Naive thymus-derived CD4-positive, alpha-beta T cell (primary cell): ENCODE measurements at regions of chr15 and their contacts with region 1.

Region 1: DNA sequence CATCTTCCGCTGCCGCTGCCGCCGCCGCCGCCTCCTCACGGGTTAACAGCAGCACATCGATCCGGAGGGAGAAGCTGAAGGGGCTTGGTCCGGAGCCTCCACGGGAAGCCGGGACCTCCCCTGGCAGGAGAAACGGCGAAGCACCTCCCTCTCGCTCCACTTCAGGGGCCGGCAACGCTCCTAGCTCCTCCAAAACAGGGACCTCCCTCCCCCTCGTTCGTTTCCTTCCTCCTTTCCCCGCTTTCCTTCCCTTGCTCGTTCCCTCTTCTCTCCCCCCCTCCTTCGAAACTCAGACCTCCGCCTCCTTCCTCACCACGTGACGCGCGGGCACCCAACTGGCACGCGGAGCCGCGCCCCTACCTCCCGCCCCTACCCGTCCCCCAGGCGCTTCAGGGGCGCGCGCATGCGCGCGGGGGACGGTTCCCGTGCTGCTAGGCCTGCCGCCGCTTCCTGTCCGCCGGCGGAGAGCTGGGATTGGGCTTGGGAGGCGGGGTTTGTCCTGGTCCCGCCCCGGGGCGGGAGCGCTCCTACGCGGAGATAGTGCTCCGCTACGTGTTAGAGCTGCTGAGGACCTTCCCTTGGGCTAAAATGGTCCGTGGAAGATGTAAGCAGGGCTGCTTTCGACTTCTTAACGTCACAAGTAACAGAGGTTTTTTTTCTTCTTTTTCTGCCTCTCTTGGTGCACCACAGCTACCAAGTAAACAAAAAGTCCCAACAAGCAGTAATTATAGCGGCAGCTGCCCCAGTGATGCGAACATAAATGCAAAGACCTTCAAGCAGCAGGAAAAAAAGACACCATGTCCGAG is at the start of gene ADAM10:
- DNase-seq: peak; percentile 84 to 98 (median 93)
- ATAC-seq: peak; percentile 96
- H3K4me3 ChIP-seq: peak within 1 kb of the TSS; percentile 66
- H3K4me3 Mint-ChIP-seq: peak within 1 kb of the TSS; percentile 89 to 99 (median 98)
- H3K27ac ChIP-seq: peak within 1 kb of the TSS; percentile 86
- H3K27ac Mint-ChIP-seq: peak within 1 kb of the TSS; percentile 85 to 96 (median 94)
- H3K4me1 ChIP-seq: peaks cover 17% of the 10 kb centered on the region in 2 donors
- H3K4me1 Mint-ChIP-seq: peaks cover 24 to 45% (median 42%) of the 10 kb centered on the region in 7 donors
- H3K27me3 ChIP-seq: no peaks in the 10 kb centered on the region
- H3K27me3 Mint-ChIP-seq: no peaks in the 10 kb centered on the region
- total RNA-seq, gene ADAM10: 119 to 170 (median 142) TPM

Region 2: DNA sequence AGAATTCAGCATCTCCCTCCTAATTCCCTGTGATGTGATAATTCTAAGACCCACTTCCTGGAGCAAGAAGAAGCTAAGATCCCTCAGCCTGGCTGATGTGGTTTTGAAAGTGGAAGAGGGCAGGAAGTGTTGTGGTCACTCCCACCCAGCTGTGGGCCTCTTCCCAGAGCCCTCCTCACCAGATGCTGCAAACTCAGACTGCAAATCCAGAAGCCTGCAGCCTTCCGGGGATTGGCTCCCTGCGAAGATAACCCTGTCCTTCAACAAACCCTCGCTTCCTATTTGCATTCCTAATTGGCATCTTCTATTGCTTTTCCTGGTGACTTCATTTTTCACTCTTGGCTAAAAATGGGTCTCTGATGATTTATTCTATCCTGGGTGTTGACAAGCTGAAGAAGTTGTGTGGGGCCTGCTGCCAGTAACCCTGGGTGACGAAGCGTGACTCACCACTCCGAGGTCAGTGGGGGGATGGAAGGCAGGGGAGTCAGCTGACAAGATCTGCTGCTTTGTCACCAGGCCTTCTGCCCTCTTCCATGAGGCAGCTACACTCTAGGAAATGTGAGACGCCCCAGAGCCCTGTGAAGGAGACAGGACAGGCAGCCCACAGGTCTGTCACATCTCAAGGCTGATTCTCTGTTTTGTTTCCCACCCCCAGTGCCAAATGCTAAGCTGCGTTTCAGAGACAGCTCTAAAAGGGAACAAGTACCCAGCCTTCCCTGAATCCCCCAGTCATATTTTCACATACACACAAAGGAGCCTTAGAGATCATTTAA is 417.6 kb before region 1 on chr15:
- CTCF ChIA-PET with region 1: no interaction called
- POLR2A ChIA-PET with region 1: no interaction called
- intact Hi-C with region 1: loop called in 1 of 2 experiments (anchors 10 kb)
- DNase-seq: peak in 6 of 9 donors; percentile 17 to 85 (median 42)
- ATAC-seq: peak; percentile 93
- H3K4me3 ChIP-seq: no peak overlapping the region
- H3K4me3 Mint-ChIP-seq: peak overlapping the region; percentile 27 to 66 (median 46)
- H3K27ac ChIP-seq: no peak overlapping the region
- H3K27ac Mint-ChIP-seq: peak overlapping the region; percentile 60 to 89 (median 80)
- H3K4me1 ChIP-seq: peaks cover 13 to 23% of the 10 kb centered on the region in 2 donors
- H3K4me1 Mint-ChIP-seq: peaks cover 26 to 48% (median 41%) of the 10 kb centered on the region in 7 donors
- H3K27me3 ChIP-seq: no peaks in the 10 kb centered on the region
- H3K27me3 Mint-ChIP-seq: no peaks in the 10 kb centered on the region

Region 3: GRCh38 chr15:58517682-58518525 is 231.8 kb before region 1 on chr15:
- CTCF ChIA-PET with region 1: no interaction called
- POLR2A ChIA-PET with region 1: no interaction called
- intact Hi-C with region 1: loop called in 1 of 2 experiments (anchors 5 kb)
- DNase-seq: peak in 5 of 9 donors; percentile 8 to 34 (median 16)
- ATAC-seq: peak; percentile 44
- H3K4me3 ChIP-seq: no peak overlapping the region
- H3K4me3 Mint-ChIP-seq: peak overlapping the region; percentile 38 to 75 (median 52)
- H3K27ac ChIP-seq: peak overlapping the region; percentile 60
- H3K27ac Mint-ChIP-seq: peak overlapping the region; percentile 41 to 95 (median 88)
- H3K4me1 ChIP-seq: peaks cover 0 to 43% of the 10 kb centered on the region in 2 donors
- H3K4me1 Mint-ChIP-seq: peaks cover 51 to 84% (median 72%) of the 10 kb centered on the region in 7 donors
- H3K27me3 ChIP-seq: no peaks in the 10 kb centered on the region
- H3K27me3 Mint-ChIP-seq: no peaks in the 10 kb centered on the region

Region 4: GRCh38 chr15:58677426-58677825 is 72.3 kb before region 1 on chr15:
- CTCF ChIA-PET with region 1: no interaction called
- POLR2A ChIA-PET with region 1: no interaction called
- intact Hi-C with region 1: loop called in 1 of 2 experiments (anchors 10 kb)
- DNase-seq: no peak
- ATAC-seq: no peak
- H3K4me3 ChIP-seq: no peak overlapping the region
- H3K4me3 Mint-ChIP-seq: no peak overlapping the region
- H3K27ac ChIP-seq: no peak overlapping the region
- H3K27ac Mint-ChIP-seq: peak overlapping the region in 1 of 9 donors; percentile 10
- H3K4me1 ChIP-seq: no peaks in the 10 kb centered on the region
- H3K4me1 Mint-ChIP-seq: peaks cover 7 to 30% (median 23%) of the 10 kb centered on the region in 7 donors
- H3K27me3 ChIP-seq: no peaks in the 10 kb centered on the region
- H3K27me3 Mint-ChIP-seq: no peaks in the 10 kb centered on the region

Region 5: GRCh38 chr15:58734859-58735258 is 14.9 kb before region 1 on chr15:
- CTCF ChIA-PET with region 1: no interaction called
- POLR2A ChIA-PET with region 1: interaction called, 9 read pairs
- intact Hi-C with region 1: loop called in 1 of 2 experiments (anchors 2 kb)
- DNase-seq: no peak
- ATAC-seq: no peak
- H3K4me3 ChIP-seq: no peak overlapping the region
- H3K4me3 Mint-ChIP-seq: peak overlapping the region in 1 of 10 donors; percentile 12
- H3K27ac ChIP-seq: no peak overlapping the region
- H3K27ac Mint-ChIP-seq: peak overlapping the region in 5 of 9 donors; percentile 4 to 84 (median 22)
- H3K4me1 ChIP-seq: peaks cover 13 to 14% of the 10 kb centered on the region in 2 donors
- H3K4me1 Mint-ChIP-seq: peaks cover 59 to 90% (median 86%) of the 10 kb centered on the region in 7 donors
- H3K27me3 ChIP-seq: no peaks in the 10 kb centered on the region
- H3K27me3 Mint-ChIP-seq: no peaks in the 10 kb centered on the region

Region 6: DNA sequence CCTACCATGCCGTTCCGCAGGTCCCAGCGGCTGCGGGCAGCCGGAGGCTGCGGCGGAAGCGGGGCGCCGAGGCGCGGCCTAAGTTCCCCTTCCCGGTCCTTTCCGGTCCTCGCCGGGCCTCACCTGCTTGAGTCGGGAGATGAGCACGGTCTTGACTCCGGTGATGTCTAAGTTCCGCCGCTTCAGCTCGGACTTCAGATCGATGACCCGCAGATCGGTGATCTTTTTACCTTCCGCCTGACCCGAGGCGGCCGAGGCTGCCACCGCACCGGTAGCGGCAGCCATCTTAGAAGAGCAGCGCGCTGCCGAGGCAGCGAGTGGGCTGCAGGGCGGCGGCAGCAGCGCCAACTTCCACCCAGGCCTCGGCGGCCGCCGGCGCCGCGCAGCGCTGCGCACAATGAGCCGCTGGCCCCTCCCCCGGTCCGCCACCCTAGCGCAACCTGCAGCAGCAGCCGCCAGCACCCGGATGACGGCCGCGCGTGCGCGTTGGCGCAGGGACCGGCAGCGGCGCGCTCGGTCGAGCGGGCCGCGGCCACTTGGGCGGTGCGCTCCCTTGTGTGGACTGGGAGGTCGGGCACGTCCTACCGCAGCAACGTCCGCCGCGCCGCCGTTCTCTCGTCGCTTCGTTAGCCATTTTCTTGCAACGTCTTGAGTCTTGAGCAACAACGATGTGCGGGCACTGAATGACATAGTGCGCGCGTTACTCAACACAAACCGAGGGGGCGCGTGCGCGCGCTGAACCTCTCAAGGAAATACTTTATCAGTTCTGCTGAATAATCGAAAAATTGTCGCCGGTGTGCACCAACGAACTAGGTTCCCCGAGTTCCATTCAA is 183.8 kb after region 1 on chr15 and contains the start of gene SLTM:
- CTCF ChIA-PET with region 1: no interaction called
- POLR2A ChIA-PET with region 1: interaction called, 4 read pairs
- intact Hi-C with region 1: loop called (anchors 1 to 2 kb)
- DNase-seq: peak; percentile 90 to 95 (median 93)
- ATAC-seq: peak; percentile 95
- H3K4me3 ChIP-seq: peak within 1 kb of the TSS; percentile 91
- H3K4me3 Mint-ChIP-seq: peak within 1 kb of the TSS; percentile 91 to 100 (median 98)
- H3K27ac ChIP-seq: peak within 1 kb of the TSS; percentile 93
- H3K27ac Mint-ChIP-seq: peak within 1 kb of the TSS; percentile 98 to 100 (median 99)
- H3K4me1 ChIP-seq: peaks cover 19 to 21% of the 10 kb centered on the region in 2 donors
- H3K4me1 Mint-ChIP-seq: peaks cover 14 to 34% (median 27%) of the 10 kb centered on the region in 7 donors
- H3K27me3 ChIP-seq: no peaks in the 10 kb centered on the region
- H3K27me3 Mint-ChIP-seq: no peaks in the 10 kb centered on the region
- total RNA-seq, gene SLTM: 118 to 166 (median 159) TPM